Endothelial cell of umbilical vein (primary cell): ENCODE measurements at regions of chr16 and their contacts with region 1.

Region 1: GRCh38 chr16:31713071-31713944 is 160.3 kb upstream of the ZNF267 start:
- DNase-seq: peak; percentile 94
- H3K4me3 ChIP-seq: peak overlapping the region; percentile 86 to 93 (median 92)
- H3K27ac ChIP-seq: peak overlapping the region; percentile 89
- H3K4me1 ChIP-seq: peaks cover 8% of the 10 kb centered on the region
- H3K27me3 ChIP-seq: no peaks in the 10 kb centered on the region
- CTCF ChIP-seq: no peak
- POLR2A ChIP-seq: peak; percentile 97

Region 2: DNA sequence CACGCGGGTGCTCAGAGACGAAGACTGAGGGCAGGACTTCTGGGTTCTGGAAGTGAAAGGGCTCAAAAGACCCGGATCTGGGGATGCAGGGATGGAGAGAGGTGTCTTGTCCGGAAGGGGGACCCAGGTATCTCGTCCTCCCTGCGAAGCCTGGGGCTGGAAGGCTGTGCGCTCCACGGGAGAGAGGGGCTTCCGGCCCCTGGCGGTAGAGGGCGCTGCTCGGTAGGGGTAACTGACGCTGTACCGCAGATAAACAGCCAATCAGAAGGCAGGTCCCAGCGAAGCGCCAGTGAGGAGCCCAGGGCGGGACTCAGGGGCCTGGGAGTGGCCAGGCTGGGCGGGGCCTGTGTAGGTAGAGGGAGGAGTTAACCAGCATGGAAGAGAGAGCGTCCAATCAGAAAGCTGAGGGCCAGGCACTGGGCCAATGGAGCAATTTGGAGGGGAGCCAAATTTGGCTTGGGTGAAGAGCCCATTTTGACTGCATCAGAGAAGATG is 240.6 kb before region 1 on chr16:
- CTCF ChIA-PET with region 1: no interaction called
- POLR2A ChIA-PET with region 1: interaction called, 4 read pairs
- dilution Hi-C with region 1: no loop called
- intact Hi-C with region 1: loop called (anchors 5 kb)
- DNase-seq: peak; percentile 81
- H3K4me3 ChIP-seq: peak overlapping the region; percentile 19 to 82 (median 71)
- H3K27ac ChIP-seq: peak overlapping the region; percentile 49
- H3K4me1 ChIP-seq: peaks cover 14% of the 10 kb centered on the region
- H3K27me3 ChIP-seq: no peaks in the 10 kb centered on the region
- CTCF ChIP-seq: peak; percentile 68 to 72
- POLR2A ChIP-seq: peak; percentile 58

Region 3: GRCh38 chr16:31700526-31701388 is 12.6 kb before region 1 on chr16:
- CTCF ChIA-PET with region 1: interaction called, 3 read pairs
- POLR2A ChIA-PET with region 1: interaction called, 5 read pairs
- dilution Hi-C with region 1: no loop called
- intact Hi-C with region 1: loop called (anchors 1 kb)
- DNase-seq: no peak
- H3K4me3 ChIP-seq: peak overlapping the region in 2 of 3 experiments; percentile 1 to 33
- H3K27ac ChIP-seq: no peak overlapping the region
- H3K4me1 ChIP-seq: no peaks in the 10 kb centered on the region
- H3K27me3 ChIP-seq: peaks cover 11% of the 10 kb centered on the region in 2 experiments
- CTCF ChIP-seq: no peak
- POLR2A ChIP-seq: no peak

Region 4: GRCh38 chr16:31807086-31807485 is 93.8 kb after region 1 on chr16:
- CTCF ChIA-PET with region 1: no interaction called
- POLR2A ChIA-PET with region 1: no interaction called
- dilution Hi-C with region 1: no loop called
- intact Hi-C with region 1: no loop called
- DNase-seq: no peak
- H3K4me3 ChIP-seq: no peak overlapping the region
- H3K27ac ChIP-seq: no peak overlapping the region
- H3K4me1 ChIP-seq: no peaks in the 10 kb centered on the region
- H3K27me3 ChIP-seq: no peaks in the 10 kb centered on the region
- CTCF ChIP-seq: no peak
- POLR2A ChIP-seq: no peak